ENCODE measurements at regions of chr17 and their contacts with region 1.

Region 1: DNA sequence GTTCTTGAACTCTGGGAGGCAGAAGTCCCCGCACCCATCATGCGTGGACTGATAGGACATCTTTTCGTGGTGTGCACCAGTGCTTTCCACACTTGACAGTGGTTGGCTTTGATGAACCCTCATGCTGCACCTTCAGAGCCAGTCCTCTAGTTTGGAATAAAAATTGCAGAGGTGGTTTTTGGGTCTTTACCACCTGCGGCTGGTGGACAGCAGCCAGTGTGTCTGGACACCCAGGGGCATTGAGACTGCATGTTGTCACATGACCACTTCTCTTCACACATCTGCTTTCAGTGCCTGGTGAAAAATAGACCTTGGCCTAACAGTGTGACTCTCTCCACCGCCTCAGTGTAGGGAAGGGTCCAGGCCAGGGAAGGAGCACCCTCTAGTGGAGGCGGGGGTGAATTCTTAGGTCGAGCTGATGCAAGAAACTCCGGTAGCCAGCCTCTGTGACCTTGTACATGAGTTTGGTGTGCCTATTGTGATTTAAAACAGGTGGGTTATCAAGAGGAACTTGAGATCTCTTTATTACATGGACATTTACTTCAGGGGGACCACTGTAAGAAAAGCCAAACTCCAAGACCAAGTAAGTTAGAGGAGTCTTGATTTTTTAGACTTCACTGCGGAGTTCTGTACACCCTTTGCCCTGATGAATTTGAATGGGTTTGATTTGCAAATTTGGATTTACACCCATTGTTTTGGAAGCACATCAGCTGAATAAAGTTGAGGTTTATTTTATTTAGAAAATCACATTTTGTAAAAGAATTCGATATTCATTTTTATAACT is 17.9 kb downstream of the GOSR2 start:
- DNase-seq: peak; percentile 80
- ATAC-seq: peak; percentile 81
- H3K4me3 Mint-ChIP-seq: no peak overlapping the region
- H3K27ac Mint-ChIP-seq: peak overlapping the region; percentile 50
- H3K4me1 Mint-ChIP-seq: peaks cover 22% of the 10 kb centered on the region
- H3K27me3 Mint-ChIP-seq: no peaks in the 10 kb centered on the region

Region 2: GRCh38 chr17:46836500-46836899 is 104.3 kb before region 1 on chr17:
- CTCF ChIA-PET with region 1: interaction called, 22 read pairs
- DNase-seq: no peak
- ATAC-seq: no peak
- H3K4me3 Mint-ChIP-seq: no peak overlapping the region
- H3K27ac Mint-ChIP-seq: no peak overlapping the region
- H3K4me1 Mint-ChIP-seq: peaks cover 9% of the 10 kb centered on the region
- H3K27me3 Mint-ChIP-seq: peaks cover 28% of the 10 kb centered on the region

Region 3: GRCh38 chr17:46841561-46842379 is 99.0 kb before region 1 on chr17:
- CTCF ChIA-PET with region 1: interaction called, 22 read pairs
- DNase-seq: no peak
- ATAC-seq: peak; percentile 20
- H3K4me3 Mint-ChIP-seq: no peak overlapping the region
- H3K27ac Mint-ChIP-seq: no peak overlapping the region
- H3K4me1 Mint-ChIP-seq: peaks cover 3% of the 10 kb centered on the region
- H3K27me3 Mint-ChIP-seq: peaks cover 41% of the 10 kb centered on the region

Region 4: DNA sequence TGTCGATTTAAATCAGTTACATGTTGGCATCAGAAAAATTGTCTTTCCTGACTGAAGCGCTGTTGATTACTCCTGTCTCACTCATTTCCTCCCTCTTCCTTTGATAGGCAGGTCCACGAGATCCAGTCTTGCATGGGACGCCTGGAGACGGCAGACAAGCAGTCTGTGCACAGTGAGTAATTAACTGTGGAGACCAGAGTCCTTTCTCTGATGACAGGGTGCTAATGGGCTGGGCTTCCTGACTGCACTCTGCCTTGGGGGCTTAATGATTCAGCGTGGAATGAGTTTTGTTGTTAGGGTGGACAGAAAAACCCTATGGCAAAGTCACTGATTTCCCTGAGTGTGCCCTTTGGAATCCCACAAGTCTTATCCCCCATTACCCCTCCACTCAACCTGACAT is 11.4 kb before region 1 on chr17:
- CTCF ChIA-PET with region 1: interaction called, 15 read pairs
- DNase-seq: no peak
- ATAC-seq: no peak
- H3K4me3 Mint-ChIP-seq: no peak overlapping the region
- H3K27ac Mint-ChIP-seq: no peak overlapping the region
- H3K4me1 Mint-ChIP-seq: peaks cover 39% of the 10 kb centered on the region
- H3K27me3 Mint-ChIP-seq: no peaks in the 10 kb centered on the region

Region 5: DNA sequence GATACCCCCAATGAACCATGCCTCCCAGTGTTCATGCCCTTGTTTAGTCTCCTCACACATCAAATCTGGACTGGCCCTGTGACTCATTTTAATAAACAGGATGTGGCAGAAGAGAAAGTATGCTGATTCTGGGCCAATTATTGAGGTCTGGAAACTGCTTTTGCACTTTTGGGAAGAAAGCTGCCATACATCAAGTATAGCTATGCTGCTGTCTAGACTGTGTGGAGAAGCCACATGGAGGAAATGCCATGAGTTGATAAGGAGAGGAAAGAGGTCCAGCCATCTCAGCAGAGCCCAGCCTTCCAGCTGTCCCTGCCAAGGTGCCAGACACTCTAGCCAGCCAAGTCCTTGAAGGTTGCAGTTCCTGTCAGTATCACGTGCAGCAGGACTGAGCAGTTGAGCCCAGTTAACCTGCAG is 21.6 kb after region 1 on chr17:
- CTCF ChIA-PET with region 1: interaction called, 13 read pairs
- DNase-seq: no peak
- ATAC-seq: peak; percentile 30
- H3K4me3 Mint-ChIP-seq: no peak overlapping the region
- H3K27ac Mint-ChIP-seq: no peak overlapping the region
- H3K4me1 Mint-ChIP-seq: peaks cover 5% of the 10 kb centered on the region
- H3K27me3 Mint-ChIP-seq: peaks cover 10% of the 10 kb centered on the region

Region 6: GRCh38 chr17:46979147-46979863 is 38.5 kb after region 1 on chr17 and contains the start of gene RPRML:
- CTCF ChIA-PET with region 1: interaction called, 12 read pairs
- DNase-seq: peak; percentile 44
- ATAC-seq: peak; percentile 77
- H3K4me3 Mint-ChIP-seq: peak within 1 kb of the TSS; percentile 59
- H3K27ac Mint-ChIP-seq: no peak within 1 kb of the TSS
- H3K4me1 Mint-ChIP-seq: peaks cover 13% of the 10 kb centered on the region
- H3K27me3 Mint-ChIP-seq: peaks cover 45% of the 10 kb centered on the region
- total RNA-seq, gene RPRML: not detected

Region 7: GRCh38 chr17:46995841-46996571 is 55.2 kb after region 1 on chr17:
- CTCF ChIA-PET with region 1: interaction called, 17 read pairs
- DNase-seq: no peak
- ATAC-seq: no peak
- H3K4me3 Mint-ChIP-seq: no peak overlapping the region
- H3K27ac Mint-ChIP-seq: no peak overlapping the region
- H3K4me1 Mint-ChIP-seq: peaks cover 2% of the 10 kb centered on the region
- H3K27me3 Mint-ChIP-seq: no peaks in the 10 kb centered on the region